HCT116 (cell line): ENCODE measurements at regions of chr17 and their contacts with region 1.

Region 1: DNA sequence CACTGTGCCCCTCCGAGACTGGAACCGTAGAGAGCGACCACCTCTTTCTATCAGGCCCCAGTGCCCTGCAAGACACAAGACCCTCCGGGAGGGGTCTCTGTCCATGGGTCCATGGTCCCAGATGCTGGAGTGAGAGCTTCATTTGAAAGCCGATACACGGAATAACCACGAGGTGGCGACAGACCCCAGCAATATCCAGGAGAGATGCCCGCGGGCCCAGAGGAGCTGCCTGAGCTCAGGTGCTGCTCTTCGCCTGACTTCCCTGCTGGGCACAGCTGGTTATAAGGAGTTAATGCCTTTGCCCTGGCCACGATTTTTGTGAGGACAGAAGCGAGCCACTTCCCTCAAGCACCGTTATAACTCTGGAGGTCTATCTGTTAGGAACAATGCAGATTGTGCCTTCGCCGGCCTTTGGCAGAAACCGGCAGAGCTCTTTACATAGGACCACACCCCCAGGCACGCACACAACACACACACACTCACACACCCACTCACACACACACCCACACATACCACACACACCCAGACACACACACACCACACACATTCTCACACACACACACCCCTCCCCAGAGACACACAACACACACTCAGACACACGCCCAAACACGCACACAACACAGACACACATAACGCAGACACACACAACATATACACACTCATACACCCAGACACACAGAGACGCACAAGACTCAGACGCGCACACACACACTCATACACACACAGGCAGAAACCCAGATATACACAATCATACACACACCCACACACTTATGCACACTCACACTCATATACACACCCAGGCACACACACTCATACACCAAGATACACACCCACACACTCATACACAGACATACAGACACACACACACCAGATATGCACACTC is 436.4 kb downstream of the SOX9 start:
- DNase-seq: peak; percentile 83
- ATAC-seq: peak; percentile 80
- H3K4me3 ChIP-seq: no peak overlapping the region
- H3K27ac ChIP-seq: peak overlapping the region; percentile 3; the same call in 1 of the 2 replicates
- H3K4me1 ChIP-seq: peaks cover 3 to 44% of the 10 kb centered on the region in 2 experiments; a peak in 3 of 4 replicates
- H3K27me3 ChIP-seq: no peaks in the 10 kb centered on the region
- CTCF ChIP-seq: peak; percentile 91 to 100 (median 99)
- POLR2A ChIP-seq: no peak
- RAD21 ChIP-seq: peak; percentile 99

Region 2: DNA sequence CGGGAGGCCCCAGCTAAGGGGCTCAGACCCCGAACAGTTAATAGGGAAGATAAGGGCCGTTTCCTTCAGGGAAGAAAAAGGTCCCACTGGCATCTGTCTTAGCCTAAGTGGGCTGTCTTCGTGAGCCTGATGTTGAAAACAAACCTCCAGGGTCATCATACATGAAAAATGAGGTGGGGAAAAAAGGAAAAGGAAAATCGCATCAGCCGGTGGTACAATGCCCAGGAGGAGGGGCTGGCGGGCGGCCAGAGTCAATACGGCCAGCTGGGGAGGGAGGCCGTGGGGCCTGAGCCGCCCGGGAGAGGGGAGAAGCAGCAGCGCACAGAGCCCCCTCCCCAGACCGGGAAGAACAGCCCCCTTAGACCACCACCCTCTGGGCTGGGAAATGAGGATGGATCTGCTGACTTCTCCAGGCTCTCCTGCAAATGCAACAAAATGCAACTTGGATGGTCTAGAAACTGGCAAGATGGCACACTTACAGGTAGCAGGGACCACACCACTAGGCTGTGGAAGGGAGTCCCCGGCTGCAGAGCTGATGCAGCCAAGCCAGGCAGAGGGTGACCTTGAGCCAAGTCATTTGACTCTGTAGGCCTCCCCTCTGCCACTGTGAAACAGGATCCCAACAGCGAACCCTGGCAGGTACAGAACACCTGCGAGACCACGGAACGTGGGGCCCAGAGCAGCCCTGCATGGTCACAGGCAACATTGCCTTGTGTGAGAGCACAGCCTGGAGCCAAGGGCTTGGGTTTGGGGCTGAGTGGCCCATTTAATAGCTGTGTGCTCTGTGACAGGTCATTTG is 12.2 kb after region 1 on chr17:
- CTCF ChIA-PET with region 1: interaction called, 14 read pairs
- POLR2A ChIA-PET with region 1: no interaction called
- RAD21 ChIA-PET with region 1: interaction called in 1 of 2 experiments, 3 read pairs
- intact Hi-C with region 1: no loop called
- DNase-seq: no peak
- ATAC-seq: no peak
- H3K4me3 ChIP-seq: no peak overlapping the region
- H3K27ac ChIP-seq: no peak overlapping the region
- H3K4me1 ChIP-seq: peaks cover 0 to 23% of the 10 kb centered on the region in 2 experiments; a peak in 2 of 4 replicates
- H3K27me3 ChIP-seq: no peaks in the 10 kb centered on the region
- CTCF ChIP-seq: no peak
- POLR2A ChIP-seq: no peak
- RAD21 ChIP-seq: no peak

Region 3: GRCh38 chr17:72661093-72661944 is 104.1 kb after region 1 on chr17:
- CTCF ChIA-PET with region 1: interaction called, 22 read pairs
- POLR2A ChIA-PET with region 1: no interaction called
- RAD21 ChIA-PET with region 1: interaction called, 6 to 8 read pairs
- intact Hi-C with region 1: loop called (anchors 1 kb)
- DNase-seq: peak; percentile 97
- ATAC-seq: peak; percentile 85
- H3K4me3 ChIP-seq: peak overlapping the region in 1 of 2 experiments; percentile 39; a peak in 2 of 4 replicates
- H3K27ac ChIP-seq: peak overlapping the region; percentile 82
- H3K4me1 ChIP-seq: peaks cover 50 to 66% of the 10 kb centered on the region in 2 experiments
- H3K27me3 ChIP-seq: no peaks in the 10 kb centered on the region
- CTCF ChIP-seq: peak in 2 of 3 experiments; percentile 89 to 99; a peak in 4 of 6 replicates
- POLR2A ChIP-seq: no peak
- RAD21 ChIP-seq: peak; percentile 41; the same call in 1 of the 2 replicates

Region 4: GRCh38 chr17:72715906-72716572 is 158.9 kb after region 1 on chr17:
- CTCF ChIA-PET with region 1: interaction called, 448 read pairs
- POLR2A ChIA-PET with region 1: interaction called, 14 read pairs
- RAD21 ChIA-PET with region 1: interaction called, 10 read pairs
- intact Hi-C with region 1: loop called (anchors 1 kb)
- DNase-seq: peak; percentile 100
- ATAC-seq: peak; percentile 87
- H3K4me3 ChIP-seq: peak overlapping the region in 1 of 2 experiments; percentile 33; a peak in 2 of 4 replicates
- H3K27ac ChIP-seq: peak overlapping the region; percentile 82
- H3K4me1 ChIP-seq: peaks cover 46 to 64% of the 10 kb centered on the region in 2 experiments
- H3K27me3 ChIP-seq: no peaks in the 10 kb centered on the region
- CTCF ChIP-seq: no peak
- POLR2A ChIP-seq: no peak
- RAD21 ChIP-seq: peak; percentile 62

Region 5: DNA sequence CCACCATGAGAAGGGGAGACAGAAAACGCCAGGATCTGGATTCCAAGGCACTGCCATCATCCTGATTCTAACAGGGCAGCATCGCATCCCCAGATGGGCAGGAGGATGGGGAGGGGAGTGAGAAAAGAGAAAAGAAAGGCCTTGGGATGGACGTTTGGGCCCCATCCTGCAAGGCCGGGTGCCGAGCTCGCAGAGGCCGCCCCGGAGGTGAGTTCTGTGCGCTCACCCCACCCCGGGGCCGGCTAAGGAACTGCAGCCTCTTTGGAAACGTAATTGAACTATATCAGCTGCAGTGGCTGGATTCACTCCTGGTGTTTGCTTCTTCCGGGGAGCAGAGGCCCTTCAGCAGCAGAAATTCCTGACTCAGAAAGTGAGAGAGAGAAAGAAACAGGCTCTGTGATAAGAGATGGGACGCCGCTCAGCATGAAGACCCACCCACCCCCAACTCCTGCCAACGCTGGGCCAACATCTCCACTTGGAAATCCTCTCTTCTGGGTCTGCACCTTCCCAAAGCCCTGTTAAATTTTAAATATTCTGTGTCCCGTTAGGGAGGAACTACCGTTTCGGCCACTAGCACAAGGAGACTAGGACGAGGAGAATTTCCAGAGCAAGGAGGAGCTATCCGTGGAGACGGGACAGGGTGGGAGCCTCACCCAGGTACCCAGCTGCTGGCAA is 599.1 kb after region 1 on chr17:
- CTCF ChIA-PET with region 1: interaction called, 14 read pairs
- POLR2A ChIA-PET with region 1: no interaction called
- RAD21 ChIA-PET with region 1: interaction called in 1 of 2 experiments, 4 read pairs
- intact Hi-C with region 1: no loop called
- DNase-seq: peak; percentile 23
- ATAC-seq: peak; percentile 99
- H3K4me3 ChIP-seq: no peak overlapping the region; a peak in 1 of 4 replicates
- H3K27ac ChIP-seq: no peak overlapping the region
- H3K4me1 ChIP-seq: peaks cover 2 to 12% of the 10 kb centered on the region in 2 experiments; a peak in 2 of 4 replicates
- H3K27me3 ChIP-seq: no peaks in the 10 kb centered on the region
- CTCF ChIP-seq: peak; percentile 85 to 97 (median 93)
- POLR2A ChIP-seq: no peak
- RAD21 ChIP-seq: peak; percentile 94

Region 6: GRCh38 chr17:73371285-73371684 is 814.1 kb after region 1 on chr17:
- CTCF ChIA-PET with region 1: interaction called, 12 read pairs
- POLR2A ChIA-PET with region 1: no interaction called
- RAD21 ChIA-PET with region 1: interaction called, 3 to 5 read pairs
- intact Hi-C with region 1: loop called (anchors 5 kb)
- DNase-seq: no peak
- ATAC-seq: no peak
- H3K4me3 ChIP-seq: no peak overlapping the region
- H3K27ac ChIP-seq: no peak overlapping the region
- H3K4me1 ChIP-seq: no peaks in the 10 kb centered on the region
- H3K27me3 ChIP-seq: peaks cover 31% of the 10 kb centered on the region; the same call in 1 of the 2 replicates
- CTCF ChIP-seq: no peak
- POLR2A ChIP-seq: no peak
- RAD21 ChIP-seq: no peak